CD4-positive, alpha-beta T cell (primary cell): ENCODE measurements at regions of chr1 and their contacts with region 1.

Region 1: DNA sequence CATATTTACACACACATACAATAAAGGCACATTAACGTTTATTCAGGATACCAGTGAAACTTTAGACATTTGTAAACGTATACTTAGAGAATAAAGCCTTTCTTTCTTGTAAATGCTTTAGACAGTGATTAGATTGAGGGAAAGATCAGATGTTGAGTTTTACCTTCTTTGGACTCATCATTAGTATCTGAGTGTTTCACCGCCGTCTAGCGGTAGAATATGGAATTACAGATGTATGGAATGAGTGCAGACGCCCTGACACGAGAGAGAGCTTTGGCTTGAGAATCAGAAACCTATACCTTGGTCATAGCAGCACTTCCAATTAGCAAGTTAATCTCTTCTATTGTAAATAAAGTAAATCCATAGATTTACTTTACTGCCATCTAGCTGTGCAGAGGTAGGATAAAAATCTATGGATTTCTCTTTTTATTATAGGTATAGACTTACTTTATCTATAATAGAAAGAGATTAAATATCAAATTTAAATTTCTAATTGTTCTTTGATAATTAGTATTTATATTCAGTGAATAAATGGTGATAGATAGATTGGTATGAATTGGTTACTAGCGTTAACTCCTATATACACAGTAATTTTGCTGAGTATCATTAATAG is 12.6 kb downstream of the FLG2 start:
- DNase-seq: peak in 13 of 14 experiments; percentile 1 to 77 (median 34)
- ATAC-seq: peak; percentile 57
- H3K4me3 ChIP-seq: no peak overlapping the region
- H3K4me3 Mint-ChIP-seq: no peak overlapping the region
- H3K27ac ChIP-seq: no peak overlapping the region
- H3K27ac Mint-ChIP-seq: no peak overlapping the region
- H3K4me1 ChIP-seq: no peaks in the 10 kb centered on the region
- H3K4me1 Mint-ChIP-seq: no peaks in the 10 kb centered on the region
- H3K27me3 ChIP-seq: peaks cover 0 to 11% of the 10 kb centered on the region in 2 experiments
- H3K27me3 Mint-ChIP-seq: peaks cover 29% of the 10 kb centered on the region
- CTCF ChIP-seq: peak; percentile 96

Region 2: GRCh38 chr1:152047730-152048402 is 299.4 kb before region 1 on chr1:
- CTCF ChIA-PET with region 1: no interaction called
- POLR2A ChIA-PET with region 1: no interaction called
- intact Hi-C with region 1: loop called (anchors 5 to 10 kb)
- DNase-seq: peak; percentile 65 to 95 (median 84)
- ATAC-seq: peak; percentile 89
- H3K4me3 ChIP-seq: peak overlapping the region; percentile 26
- H3K4me3 Mint-ChIP-seq: peak overlapping the region; percentile 72
- H3K27ac ChIP-seq: peak overlapping the region; percentile 94 to 96
- H3K27ac Mint-ChIP-seq: peak overlapping the region; percentile 96
- H3K4me1 ChIP-seq: peaks cover 39% of the 10 kb centered on the region
- H3K4me1 Mint-ChIP-seq: peaks cover 31% of the 10 kb centered on the region
- H3K27me3 ChIP-seq: peaks cover 0 to under 1% of the 10 kb centered on the region in 2 experiments
- H3K27me3 Mint-ChIP-seq: peaks cover 4% of the 10 kb centered on the region
- CTCF ChIP-seq: peak; percentile 52